ENCODE measurements at regions of chr16 and their contacts with region 1.

Region 1: DNA sequence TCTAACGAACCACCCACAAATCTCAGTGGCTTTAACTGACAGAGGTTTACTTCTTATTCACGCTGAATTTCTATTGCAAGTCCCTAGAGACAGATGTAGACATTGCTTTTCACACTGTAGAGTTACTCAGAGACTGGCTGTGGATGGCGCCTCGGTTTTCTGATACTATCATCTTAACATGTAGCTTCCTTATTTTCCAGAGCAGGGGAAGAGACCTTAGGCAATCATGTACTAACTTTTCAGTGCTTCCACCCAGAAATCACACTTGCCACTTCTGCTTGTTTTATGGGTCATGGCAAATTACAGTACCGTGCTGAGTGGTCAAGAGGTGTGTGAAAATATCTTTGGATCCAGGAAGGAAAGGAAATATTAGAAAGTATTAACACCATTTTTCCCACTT is 65.4 kb downstream of the MAF start:
- H3K4me3 Mint-ChIP-seq: no peak overlapping the region
- H3K27ac Mint-ChIP-seq: no peak overlapping the region
- H3K4me1 Mint-ChIP-seq: peaks cover 20% of the 10 kb centered on the region
- H3K27me3 Mint-ChIP-seq: peaks cover 10% of the 10 kb centered on the region

Region 2: GRCh38 chr16:79456036-79456435 is 79.1 kb before region 1 on chr16:
- intact Hi-C with region 1: no loop called
- H3K4me3 Mint-ChIP-seq: no peak overlapping the region
- H3K27ac Mint-ChIP-seq: no peak overlapping the region
- H3K4me1 Mint-ChIP-seq: peaks cover 15% of the 10 kb centered on the region
- H3K27me3 Mint-ChIP-seq: peaks cover 3% of the 10 kb centered on the region

Region 3: DNA sequence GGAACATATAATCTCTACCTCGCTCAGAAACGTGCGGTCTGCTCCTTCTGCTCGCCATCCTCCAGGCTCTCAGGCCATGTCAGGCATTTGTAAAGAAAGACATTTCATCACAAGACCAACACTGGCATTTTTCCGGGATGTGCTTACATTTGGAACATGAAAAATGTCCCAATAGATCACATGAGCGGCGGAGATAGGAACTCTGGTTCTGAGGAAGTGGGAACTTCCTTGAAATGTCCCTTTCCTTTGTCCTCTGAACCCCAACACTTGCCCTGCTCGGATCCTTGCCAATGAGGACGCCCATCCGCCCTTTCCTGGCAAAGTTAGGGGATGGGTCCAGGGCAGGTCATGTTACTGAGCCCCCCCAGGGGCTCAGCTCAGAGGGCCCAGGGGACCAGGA is 65.1 kb before region 1 on chr16:
- intact Hi-C with region 1: no loop called
- H3K4me3 Mint-ChIP-seq: no peak overlapping the region
- H3K27ac Mint-ChIP-seq: peak overlapping the region; percentile 50
- H3K4me1 Mint-ChIP-seq: peaks cover 36% of the 10 kb centered on the region
- H3K27me3 Mint-ChIP-seq: peaks cover 18% of the 10 kb centered on the region

Region 4: DNA sequence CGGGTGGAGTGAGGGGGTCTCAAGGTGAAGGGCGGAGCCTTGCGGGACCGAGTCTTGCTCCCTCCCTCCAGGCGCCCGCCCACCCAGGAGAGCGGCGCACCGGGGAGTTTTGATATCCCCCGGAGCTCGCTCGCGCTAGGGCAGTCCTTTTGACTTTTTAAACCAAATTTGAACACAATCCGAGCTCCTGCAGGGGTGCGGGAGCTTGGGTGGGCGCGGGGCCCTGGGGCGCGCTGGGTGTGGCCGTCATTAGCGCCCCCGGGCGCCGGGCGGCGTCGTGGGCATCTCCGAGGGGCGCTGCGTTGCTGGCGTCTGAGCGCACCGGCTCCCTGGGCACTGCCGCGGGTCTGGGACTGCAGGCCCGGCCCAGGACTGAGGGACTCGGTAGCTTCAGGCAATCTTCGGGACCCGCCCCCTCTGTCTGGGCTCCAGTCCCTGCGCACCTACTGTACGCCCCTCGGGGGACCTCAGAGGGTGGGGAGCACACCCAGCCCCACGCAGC is 54.5 kb after region 1 on chr16:
- intact Hi-C with region 1: loop called (anchors 10 kb)
- H3K4me3 Mint-ChIP-seq: peak overlapping the region; percentile 46
- H3K27ac Mint-ChIP-seq: peak overlapping the region; percentile 60
- H3K4me1 Mint-ChIP-seq: peaks cover 43% of the 10 kb centered on the region
- H3K27me3 Mint-ChIP-seq: peaks cover 52% of the 10 kb centered on the region